Tibial artery (tissue), 4 donors: ENCODE measurements at regions of chr7 and their contacts with region 1.

Region 1: GRCh38 chr7:132318352-132319318 is 257.6 kb downstream of the PLXNA4 start:
- DNase-seq: peak; percentile 78 to 88
- H3K4me3 ChIP-seq: no peak overlapping the region
- H3K27ac ChIP-seq: no peak overlapping the region
- H3K4me1 ChIP-seq: peaks cover 0 to 8% (median 4%) of the 10 kb centered on the region in 4 donors
- H3K27me3 ChIP-seq: peaks cover 0 to 9% of the 10 kb centered on the region in 2 donors
- CTCF ChIP-seq: peak; percentile 88

Region 2: GRCh38 chr7:132500727-132501440 is 182.2 kb after region 1 on chr7:
- intact Hi-C with region 1: loop called (anchors 5 kb)
- DNase-seq: peak; percentile 80 to 83
- H3K4me3 ChIP-seq: no peak overlapping the region
- H3K27ac ChIP-seq: no peak overlapping the region
- H3K4me1 ChIP-seq: no peaks in the 10 kb centered on the region
- H3K27me3 ChIP-seq: no peaks in the 10 kb centered on the region
- CTCF ChIP-seq: peak; percentile 19 to 41

Region 3: DNA sequence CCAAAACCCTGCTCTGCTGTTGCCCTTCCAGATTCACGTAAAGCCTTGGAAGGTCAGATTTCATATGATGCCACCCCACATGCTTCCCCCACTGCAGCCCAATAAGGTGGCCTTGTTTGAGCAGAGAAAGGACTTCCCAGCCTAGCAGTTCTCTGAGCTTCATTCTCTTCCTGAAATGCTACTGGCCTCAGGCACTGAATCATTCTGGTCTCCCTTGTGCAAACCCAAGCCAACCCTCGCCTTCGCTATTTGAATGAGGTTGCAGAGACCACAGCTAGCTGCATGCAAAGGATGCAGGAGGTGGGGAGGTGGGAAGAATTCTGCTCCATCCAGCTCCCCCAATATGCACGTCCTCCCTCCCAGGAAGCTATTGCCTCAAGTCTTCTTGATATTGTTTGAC is 318.0 kb after region 1 on chr7:
- intact Hi-C with region 1: no loop called
- DNase-seq: no peak
- H3K4me3 ChIP-seq: no peak overlapping the region
- H3K27ac ChIP-seq: no peak overlapping the region
- H3K4me1 ChIP-seq: no peaks in the 10 kb centered on the region
- H3K27me3 ChIP-seq: no peaks in the 10 kb centered on the region
- CTCF ChIP-seq: no peak